ENCODE measurements at regions of chr2 and their contacts with region 1.

Region 1: DNA sequence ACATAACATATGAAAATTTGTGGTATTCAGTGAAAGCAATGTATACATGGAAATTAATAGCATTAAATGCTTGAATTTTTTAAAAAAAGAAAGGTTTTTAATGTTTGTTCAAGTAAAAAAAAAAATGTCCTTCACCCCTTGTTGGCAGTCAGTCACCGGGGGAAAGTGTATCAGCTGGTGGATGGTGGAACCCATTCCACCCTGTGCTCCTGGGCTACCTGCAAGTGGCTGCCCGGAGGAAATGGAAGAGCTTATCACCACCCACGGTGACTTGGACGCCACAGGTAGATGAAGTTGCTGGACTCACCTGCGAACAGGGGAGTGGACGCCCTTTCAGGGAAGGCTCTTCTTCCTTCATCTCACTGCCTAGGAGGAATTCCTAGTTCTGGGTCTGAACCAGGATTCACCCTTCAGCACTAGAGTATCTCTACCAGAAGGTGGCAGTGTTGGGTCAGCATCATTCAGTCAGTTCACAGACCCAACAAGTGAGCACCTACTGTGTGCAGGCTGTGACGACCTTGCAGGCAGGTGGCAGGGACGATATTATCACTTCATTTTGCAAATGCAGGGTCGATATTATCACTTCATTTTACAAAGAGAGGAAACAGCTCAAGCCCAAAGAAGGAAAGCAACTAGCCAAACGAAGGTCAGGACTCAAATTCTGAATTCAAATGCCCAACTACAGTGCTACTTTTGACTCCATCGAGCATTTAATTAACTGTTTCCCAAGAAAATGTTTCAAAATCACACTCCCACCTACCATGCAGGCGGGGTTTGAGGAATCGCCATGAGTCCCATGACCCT is 35.8 kb downstream of the CIB4 start:
- DNase-seq: peak; percentile 74
- H3K4me3 ChIP-seq: no peak overlapping the region
- H3K27ac ChIP-seq: no peak overlapping the region
- H3K4me1 ChIP-seq: no peaks in the 10 kb centered on the region
- H3K27me3 ChIP-seq: no peaks in the 10 kb centered on the region
- CTCF ChIP-seq: peak; percentile 78 to 86 (median 82)
- POLR2A ChIP-seq: no peak

Region 2: GRCh38 chr2:25920326-25920725 is 685.1 kb before region 1 on chr2:
- intact Hi-C with region 1: no loop called
- DNase-seq: no peak
- H3K4me3 ChIP-seq: no peak overlapping the region
- H3K27ac ChIP-seq: no peak overlapping the region
- H3K4me1 ChIP-seq: no peaks in the 10 kb centered on the region
- H3K27me3 ChIP-seq: no peaks in the 10 kb centered on the region
- CTCF ChIP-seq: no peak
- POLR2A ChIP-seq: no peak

Region 3: GRCh38 chr2:26542194-26542455 is 63.3 kb before region 1 on chr2:
- intact Hi-C with region 1: no loop called
- DNase-seq: no peak
- H3K4me3 ChIP-seq: no peak overlapping the region
- H3K27ac ChIP-seq: no peak overlapping the region
- H3K4me1 ChIP-seq: no peaks in the 10 kb centered on the region
- H3K27me3 ChIP-seq: no peaks in the 10 kb centered on the region
- CTCF ChIP-seq: no peak
- POLR2A ChIP-seq: no peak

Region 4: GRCh38 chr2:26740890-26741302 is 135.5 kb after region 1 on chr2:
- intact Hi-C with region 1: loop called (anchors 5 kb)
- DNase-seq: peak; percentile 26
- H3K4me3 ChIP-seq: no peak overlapping the region
- H3K27ac ChIP-seq: no peak overlapping the region
- H3K4me1 ChIP-seq: peaks cover 4% of the 10 kb centered on the region
- H3K27me3 ChIP-seq: no peaks in the 10 kb centered on the region
- CTCF ChIP-seq: no peak
- POLR2A ChIP-seq: no peak

Measured in testis (tissue), 5 donors.